MCF 10A (cell line): ENCODE measurements at regions of chr17 and their contacts with region 1.

Region 1: DNA sequence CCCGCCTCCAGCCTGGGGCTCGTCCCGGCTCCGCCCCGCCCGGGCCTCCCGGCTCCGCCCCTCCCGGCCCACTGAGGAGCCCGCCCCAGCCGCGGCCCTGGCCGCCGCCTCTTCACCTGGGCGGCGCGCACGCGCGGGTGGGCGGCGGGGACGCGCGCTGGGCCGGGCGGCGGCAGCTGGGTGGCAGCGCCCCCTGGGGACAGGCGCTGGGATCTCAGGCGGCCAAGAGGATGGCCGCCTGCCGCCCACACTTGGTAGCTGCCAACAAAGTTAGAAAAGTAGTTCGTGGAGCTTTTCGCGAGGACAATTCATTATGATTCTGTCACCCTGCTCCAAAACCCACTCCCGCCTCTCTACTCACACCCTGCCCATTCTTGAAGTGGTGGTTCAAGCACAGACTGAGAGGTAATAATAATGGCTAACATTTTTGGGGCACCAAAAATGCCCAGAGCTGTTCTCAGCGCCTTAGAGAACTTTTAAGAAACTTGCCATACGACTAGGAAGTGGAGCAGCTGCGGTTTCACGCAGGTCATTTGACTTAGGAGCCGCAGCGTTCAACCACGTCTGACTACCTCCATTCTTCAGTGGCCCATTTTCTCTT is 340 bp upstream of the MYO1D start:
- DNase-seq: peak; percentile 86
- H3K4me3 Mint-ChIP-seq: peak overlapping the region; percentile 77
- H3K27ac Mint-ChIP-seq: peak overlapping the region; percentile 52
- H3K4me1 Mint-ChIP-seq: peaks cover 17% of the 10 kb centered on the region
- H3K27me3 Mint-ChIP-seq: no peaks in the 10 kb centered on the region
- CTCF ChIP-seq: peak; percentile 93

Region 2: GRCh38 chr17:32803544-32803943 is 73.7 kb before region 1 on chr17:
- CTCF ChIA-PET with region 1: interaction called, 59 read pairs
- POLR2A ChIA-PET with region 1: interaction called, 15 read pairs
- intact Hi-C with region 1: no loop called
- DNase-seq: peak; percentile 21
- H3K4me3 Mint-ChIP-seq: no peak overlapping the region
- H3K27ac Mint-ChIP-seq: no peak overlapping the region
- H3K4me1 Mint-ChIP-seq: peaks cover 9% of the 10 kb centered on the region
- H3K27me3 Mint-ChIP-seq: no peaks in the 10 kb centered on the region
- CTCF ChIP-seq: no peak

Region 3: GRCh38 chr17:32828822-32829221 is 48.4 kb before region 1 on chr17:
- CTCF ChIA-PET with region 1: interaction called, 53 read pairs
- POLR2A ChIA-PET with region 1: interaction called, 78 read pairs
- intact Hi-C with region 1: loop called (anchors 5 kb)
- DNase-seq: no peak
- H3K4me3 Mint-ChIP-seq: peak overlapping the region; percentile 85
- H3K27ac Mint-ChIP-seq: peak overlapping the region; percentile 94
- H3K4me1 Mint-ChIP-seq: peaks cover 28% of the 10 kb centered on the region
- H3K27me3 Mint-ChIP-seq: no peaks in the 10 kb centered on the region
- CTCF ChIP-seq: no peak

Region 4: DNA sequence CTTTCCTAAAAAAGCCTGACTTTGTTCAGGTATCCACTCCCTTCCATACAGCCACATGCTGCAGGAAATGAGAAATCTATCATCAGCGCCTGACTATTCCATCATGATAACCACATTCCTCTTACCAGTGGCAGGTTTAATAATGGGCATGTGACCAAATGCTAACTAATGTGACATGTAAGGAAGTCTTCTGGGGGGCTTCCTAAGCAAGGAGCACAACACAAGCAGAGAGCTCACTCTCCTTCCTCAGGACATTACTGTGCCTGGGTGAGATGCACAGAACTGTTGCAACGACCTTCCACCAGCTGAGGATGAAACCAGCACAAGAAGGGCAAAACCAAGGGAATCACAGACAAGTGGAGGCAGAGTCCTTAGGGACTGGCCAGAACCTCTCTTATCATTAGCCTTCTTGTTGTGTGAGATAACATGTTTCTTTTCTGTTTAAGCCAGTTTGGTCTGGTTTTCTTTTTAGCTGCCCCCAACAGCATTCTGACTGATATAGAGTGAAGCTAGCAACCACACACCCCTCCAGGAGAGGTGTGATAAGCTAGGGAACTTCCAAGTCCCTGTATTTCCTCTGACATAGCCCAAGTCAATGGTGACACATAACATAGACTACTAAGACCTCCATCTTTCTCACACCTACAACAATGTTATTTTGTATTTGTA is 17.3 kb before region 1 on chr17:
- CTCF ChIA-PET with region 1: interaction called, 23 read pairs
- POLR2A ChIA-PET with region 1: interaction called, 19 read pairs
- intact Hi-C with region 1: no loop called
- DNase-seq: no peak
- H3K4me3 Mint-ChIP-seq: no peak overlapping the region
- H3K27ac Mint-ChIP-seq: no peak overlapping the region
- H3K4me1 Mint-ChIP-seq: peaks cover 5% of the 10 kb centered on the region
- H3K27me3 Mint-ChIP-seq: no peaks in the 10 kb centered on the region
- CTCF ChIP-seq: no peak

Region 5: DNA sequence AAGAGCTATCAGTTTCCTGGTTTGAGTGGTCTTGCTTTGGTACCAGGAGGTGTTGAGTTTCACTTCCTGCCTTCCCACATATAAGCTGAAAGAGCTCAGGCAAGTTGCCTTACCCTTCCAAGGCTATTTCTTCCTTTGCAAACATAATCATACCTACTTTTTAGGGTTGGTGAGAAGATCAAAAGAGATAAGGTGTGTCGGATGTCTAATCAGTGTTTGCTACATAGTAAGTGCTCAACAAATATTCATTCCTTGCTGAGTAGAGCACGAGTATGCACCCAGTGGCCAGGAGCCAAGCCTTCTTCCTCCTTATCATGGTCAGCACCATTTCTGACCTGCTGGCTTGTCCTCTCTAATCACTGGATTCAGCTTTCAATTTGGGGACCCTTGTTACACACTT is 38.0 kb after region 1 on chr17:
- CTCF ChIA-PET with region 1: interaction called, 58 read pairs
- POLR2A ChIA-PET with region 1: interaction called, 22 read pairs
- intact Hi-C with region 1: loop called (anchors 5 kb)
- DNase-seq: no peak
- H3K4me3 Mint-ChIP-seq: no peak overlapping the region
- H3K27ac Mint-ChIP-seq: no peak overlapping the region
- H3K4me1 Mint-ChIP-seq: no peaks in the 10 kb centered on the region
- H3K27me3 Mint-ChIP-seq: no peaks in the 10 kb centered on the region
- CTCF ChIP-seq: no peak

Region 6: DNA sequence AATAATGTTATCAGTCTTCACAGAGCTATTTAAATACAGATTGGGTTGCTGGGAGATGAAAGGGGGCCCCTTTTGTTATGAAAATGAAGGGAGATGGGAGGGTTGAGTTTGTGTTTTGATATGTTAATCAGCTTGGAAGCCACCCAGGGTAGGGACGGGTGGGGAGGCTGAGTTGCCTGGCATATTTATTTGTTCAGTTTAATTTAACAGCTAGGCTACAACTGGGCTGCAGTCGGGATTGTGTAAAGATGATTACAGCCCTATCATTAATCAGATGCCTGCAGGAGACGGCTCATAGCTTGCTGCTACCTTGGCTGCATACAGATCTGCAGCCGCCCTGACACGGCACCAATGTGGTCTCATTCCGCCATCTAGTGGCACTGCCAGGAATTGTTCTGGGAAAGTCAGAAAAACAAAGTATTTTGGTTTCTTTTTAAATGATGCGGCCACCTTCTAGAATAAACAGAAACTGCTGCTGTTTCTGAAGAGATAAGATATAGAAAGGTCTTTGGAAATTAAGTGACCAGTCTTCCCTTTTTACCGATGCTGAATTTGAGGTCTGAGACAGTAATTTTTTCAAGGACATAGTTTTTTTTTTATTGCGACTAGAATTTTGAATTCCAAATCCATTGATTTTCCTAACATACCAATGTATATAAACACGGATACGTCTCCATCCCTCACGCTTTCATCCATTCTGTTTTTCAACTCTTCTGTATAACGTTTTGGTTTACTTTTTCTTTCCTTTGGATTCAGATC is 873.9 kb after region 1 on chr17:
- CTCF ChIA-PET with region 1: interaction called, 5 read pairs
- POLR2A ChIA-PET with region 1: no interaction called
- intact Hi-C with region 1: loop called (anchors 2 kb)
- DNase-seq: peak; percentile 52
- H3K4me3 Mint-ChIP-seq: peak overlapping the region; percentile 47
- H3K27ac Mint-ChIP-seq: no peak overlapping the region
- H3K4me1 Mint-ChIP-seq: no peaks in the 10 kb centered on the region
- H3K27me3 Mint-ChIP-seq: no peaks in the 10 kb centered on the region
- CTCF ChIP-seq: peak; percentile 95